ENCODE measurements at regions of chr3 and their contacts with region 1.

Region 1: DNA sequence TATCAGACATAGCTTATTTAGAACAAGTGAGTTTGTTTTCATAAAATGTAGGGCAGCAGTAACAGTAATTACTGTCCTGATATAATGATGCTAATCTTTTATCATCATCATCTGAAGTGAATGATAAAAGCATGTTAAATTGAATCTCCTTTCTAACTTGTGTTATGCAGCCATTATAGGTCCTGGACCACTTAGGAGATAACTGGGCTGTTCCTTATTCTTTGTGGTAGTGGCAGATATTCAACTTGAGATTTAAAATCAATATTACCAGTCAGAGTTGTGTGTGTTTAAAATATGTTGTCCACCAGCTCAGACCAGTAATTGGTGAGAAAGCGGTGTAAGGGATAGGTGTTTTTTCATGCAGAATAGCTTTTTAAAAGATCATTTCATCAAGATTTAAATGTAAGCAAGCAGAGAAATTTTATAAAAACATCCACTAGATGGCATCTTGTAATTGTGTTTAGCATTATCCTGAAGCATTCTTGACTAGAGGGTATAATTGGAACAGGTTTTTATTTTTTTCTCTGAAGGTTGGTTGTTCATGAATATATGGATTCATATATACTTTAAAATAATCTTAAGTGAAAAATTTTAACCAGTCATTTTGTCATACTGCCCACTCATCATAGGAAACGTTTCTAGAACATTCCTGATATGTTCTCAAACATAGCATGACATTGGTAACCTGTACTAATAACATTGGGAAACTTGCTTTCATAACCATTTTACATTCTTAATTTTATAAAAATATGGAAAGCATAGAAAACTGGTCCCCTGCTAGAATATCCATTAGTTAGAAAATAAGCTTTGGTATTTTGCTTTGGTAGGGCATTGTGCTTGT is 153.9 kb downstream of the BBX start:
- DNase-seq: no peak
- H3K4me3 Mint-ChIP-seq: no peak overlapping the region
- H3K27ac Mint-ChIP-seq: no peak overlapping the region
- H3K4me1 Mint-ChIP-seq: peaks cover 23% of the 10 kb centered on the region
- H3K27me3 Mint-ChIP-seq: no peaks in the 10 kb centered on the region

Region 2: GRCh38 chr3:107574650-107575049 is 102.0 kb before region 1 on chr3:
- CTCF ChIA-PET with region 1: interaction called, 17 read pairs
- POLR2A ChIA-PET with region 1: no interaction called
- intact Hi-C with region 1: no loop called
- DNase-seq: no peak
- H3K4me3 Mint-ChIP-seq: no peak overlapping the region
- H3K27ac Mint-ChIP-seq: no peak overlapping the region
- H3K4me1 Mint-ChIP-seq: peaks cover 30% of the 10 kb centered on the region
- H3K27me3 Mint-ChIP-seq: no peaks in the 10 kb centered on the region

Region 3: DNA sequence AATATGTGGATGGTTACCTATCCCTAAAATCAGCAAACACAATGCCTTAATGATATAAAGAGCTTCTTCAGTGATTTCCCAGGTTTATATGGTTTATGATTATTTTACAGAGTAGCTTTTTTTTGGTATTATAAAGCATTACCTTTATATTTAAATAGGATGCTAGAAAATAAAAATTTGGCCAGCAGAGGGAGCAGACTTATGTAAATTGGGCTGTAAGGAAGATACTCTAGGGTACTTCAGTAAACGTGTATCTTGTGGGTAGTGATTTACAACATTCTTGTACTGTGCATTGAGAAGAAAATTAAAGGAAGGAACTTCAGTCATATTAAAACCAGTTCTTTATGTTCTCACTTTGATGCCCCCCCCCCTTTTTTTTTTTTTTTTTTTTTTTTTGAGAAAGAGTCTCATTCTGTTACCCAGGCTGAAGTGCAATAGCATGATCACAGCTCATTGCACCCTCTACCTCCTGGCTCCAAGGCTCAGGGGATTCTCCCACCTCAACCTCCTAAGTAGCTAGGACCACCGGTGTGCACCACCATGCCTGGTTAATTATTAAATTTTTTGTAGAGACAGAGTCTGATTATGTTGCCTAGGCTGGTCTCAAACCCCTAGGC is 13.9 kb after region 1 on chr3:
- CTCF ChIA-PET with region 1: interaction called, 51 read pairs
- POLR2A ChIA-PET with region 1: no interaction called
- intact Hi-C with region 1: no loop called
- DNase-seq: no peak
- H3K4me3 Mint-ChIP-seq: no peak overlapping the region
- H3K27ac Mint-ChIP-seq: no peak overlapping the region
- H3K4me1 Mint-ChIP-seq: peaks cover 7% of the 10 kb centered on the region
- H3K27me3 Mint-ChIP-seq: no peaks in the 10 kb centered on the region

Region 4: DNA sequence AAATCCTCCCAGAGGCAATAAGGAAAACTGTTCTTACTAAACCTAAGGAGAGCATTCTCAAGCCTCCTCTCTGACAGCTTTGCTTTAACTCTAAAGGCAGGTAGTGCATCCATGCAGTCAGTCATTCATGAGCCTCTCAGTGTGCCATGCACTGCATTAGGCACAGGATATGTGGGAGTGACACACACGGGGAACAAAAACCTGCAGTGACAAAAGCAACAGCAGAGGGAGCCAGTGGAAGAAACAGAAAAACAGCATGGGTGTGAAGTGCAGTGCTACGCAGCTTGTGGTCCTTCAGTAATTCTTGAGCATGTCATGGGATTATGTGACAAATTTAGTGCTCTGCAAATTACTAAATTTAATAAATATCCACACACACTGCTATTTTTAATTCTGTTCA is 76.8 kb after region 1 on chr3:
- CTCF ChIA-PET with region 1: interaction called, 15 read pairs
- POLR2A ChIA-PET with region 1: no interaction called
- intact Hi-C with region 1: loop called (anchors 1 kb)
- DNase-seq: peak; percentile 37
- H3K4me3 Mint-ChIP-seq: no peak overlapping the region
- H3K27ac Mint-ChIP-seq: no peak overlapping the region
- H3K4me1 Mint-ChIP-seq: no peaks in the 10 kb centered on the region
- H3K27me3 Mint-ChIP-seq: no peaks in the 10 kb centered on the region

Region 5: DNA sequence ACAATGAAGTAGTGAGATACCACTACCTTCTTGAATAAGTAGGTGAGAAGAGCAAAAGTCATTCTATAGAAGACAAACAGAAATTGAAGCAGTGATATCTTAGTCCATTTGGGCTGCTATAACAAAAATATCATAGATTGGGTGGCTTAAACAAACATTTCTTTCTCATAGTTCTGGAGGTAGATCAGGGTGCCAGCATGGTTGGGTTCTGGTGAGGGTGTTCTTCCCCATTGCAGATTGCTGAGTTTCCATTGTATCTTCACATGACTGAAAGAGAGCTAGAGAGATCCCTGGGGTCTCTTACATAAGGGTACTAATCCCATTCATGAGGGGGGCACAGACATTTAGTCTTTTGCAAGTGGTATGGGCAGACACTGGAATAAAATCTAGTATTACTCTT is 578.4 kb after region 1 on chr3:
- CTCF ChIA-PET with region 1: no interaction called
- POLR2A ChIA-PET with region 1: no interaction called
- intact Hi-C with region 1: no loop called
- DNase-seq: no peak
- H3K4me3 Mint-ChIP-seq: no peak overlapping the region
- H3K27ac Mint-ChIP-seq: no peak overlapping the region
- H3K4me1 Mint-ChIP-seq: no peaks in the 10 kb centered on the region
- H3K27me3 Mint-ChIP-seq: no peaks in the 10 kb centered on the region

Region 6: DNA sequence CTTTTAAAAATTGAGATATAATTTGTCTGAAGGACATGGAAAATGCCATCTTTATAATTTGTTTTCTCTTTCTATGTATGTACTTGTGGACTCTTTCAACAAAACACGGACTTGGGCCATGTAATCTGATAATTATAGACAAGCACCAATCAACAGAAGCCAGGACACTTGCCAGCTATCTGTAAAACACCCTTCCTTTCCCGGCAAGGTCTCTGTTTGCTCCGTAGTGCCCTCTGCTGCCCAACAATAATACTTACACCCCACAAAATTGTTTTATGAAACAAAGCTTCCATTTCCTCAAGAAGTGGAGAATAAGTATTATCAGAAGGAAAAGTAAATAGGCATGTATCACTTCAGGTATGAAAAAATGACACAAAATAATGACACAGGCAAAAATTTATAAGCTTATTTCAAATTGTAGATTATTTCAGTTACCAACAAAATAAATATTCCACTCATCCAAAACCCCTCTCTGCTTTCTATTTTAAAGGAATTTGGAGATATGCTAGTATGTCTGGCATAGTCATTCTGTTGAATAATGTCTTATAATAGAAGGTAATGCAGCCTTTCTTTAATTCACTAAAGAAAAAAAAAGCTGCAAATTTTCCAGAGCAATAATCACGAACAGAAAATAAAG is 800.9 kb after region 1 on chr3:
- CTCF ChIA-PET with region 1: interaction called, 25 read pairs
- POLR2A ChIA-PET with region 1: no interaction called
- intact Hi-C with region 1: loop called (anchors 10 kb)
- DNase-seq: peak; percentile 67
- H3K4me3 Mint-ChIP-seq: no peak overlapping the region
- H3K27ac Mint-ChIP-seq: no peak overlapping the region
- H3K4me1 Mint-ChIP-seq: peaks cover 3% of the 10 kb centered on the region
- H3K27me3 Mint-ChIP-seq: peaks cover 1% of the 10 kb centered on the region